Naive thymus-derived CD4-positive, alpha-beta T cell (primary cell): ENCODE measurements at regions of chr19 and their contacts with region 1.

Region 1: DNA sequence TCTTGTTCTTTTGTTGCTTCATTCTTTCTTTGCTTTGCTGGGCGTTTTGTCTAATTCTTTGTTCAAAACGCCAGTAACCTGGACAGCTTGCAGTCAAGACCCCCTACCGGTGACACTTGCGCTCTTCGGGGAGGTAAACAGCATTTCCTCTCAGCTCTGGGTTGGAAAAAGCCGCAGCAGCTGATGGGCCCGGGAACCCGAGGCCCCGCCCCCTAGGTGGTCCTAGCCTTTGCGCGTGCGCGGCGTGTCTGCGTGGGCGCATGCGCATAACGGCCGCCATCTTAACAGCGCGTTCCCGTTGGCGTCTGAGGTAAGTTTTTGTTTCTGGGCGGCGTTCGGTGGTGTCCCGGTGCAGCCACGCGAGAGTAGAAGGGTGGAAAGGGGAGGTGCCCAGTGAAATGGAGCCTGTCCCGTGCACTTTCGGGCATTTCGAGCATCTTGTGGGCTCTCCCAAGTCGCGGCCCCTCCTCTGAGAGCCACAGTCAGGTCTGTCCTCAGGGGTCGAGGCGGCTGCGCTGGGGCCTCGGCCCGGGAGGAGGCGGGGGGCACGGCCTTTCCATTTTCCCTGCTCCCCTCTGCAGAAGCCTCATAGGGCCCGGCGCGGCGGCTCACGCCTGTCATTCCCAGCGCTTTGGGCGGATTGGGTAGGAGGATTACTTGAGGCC is at the start of gene ZNF559:
- DNase-seq: peak; percentile 93 to 99 (median 97)
- ATAC-seq: peak; percentile 97
- H3K4me3 ChIP-seq: peak within 1 kb of the TSS; percentile 74
- H3K4me3 Mint-ChIP-seq: peak within 1 kb of the TSS; percentile 92 to 99 (median 95)
- H3K27ac ChIP-seq: peak within 1 kb of the TSS; percentile 85
- H3K27ac Mint-ChIP-seq: peak within 1 kb of the TSS; percentile 91 to 97 (median 93)
- H3K4me1 ChIP-seq: peaks cover 0 to 10% of the 10 kb centered on the region in 2 donors
- H3K4me1 Mint-ChIP-seq: peaks cover 6 to 46% (median 29%) of the 10 kb centered on the region in 7 donors
- H3K27me3 ChIP-seq: no peaks in the 10 kb centered on the region
- H3K27me3 Mint-ChIP-seq: peaks cover 0 to 2% (median 0%) of the 10 kb centered on the region in 5 donors
- total RNA-seq, gene ZNF559: 9.1 to 58.2 (median 16.5) TPM

Region 2: GRCh38 chr19:9205501-9206113 is 118.4 kb before region 1 on chr19:
- CTCF ChIA-PET with region 1: interaction called, 3 read pairs
- POLR2A ChIA-PET with region 1: no interaction called
- intact Hi-C with region 1: loop called in 1 of 2 experiments (anchors 1 kb)
- DNase-seq: peak; percentile 36 to 63 (median 53)
- ATAC-seq: peak; percentile 69
- H3K4me3 ChIP-seq: no peak overlapping the region
- H3K4me3 Mint-ChIP-seq: peak overlapping the region in 9 of 10 donors; percentile 37 to 69 (median 56)
- H3K27ac ChIP-seq: no peak overlapping the region
- H3K27ac Mint-ChIP-seq: no peak overlapping the region
- H3K4me1 ChIP-seq: no peaks in the 10 kb centered on the region
- H3K4me1 Mint-ChIP-seq: peaks cover 0 to 8% (median 0%) of the 10 kb centered on the region in 7 donors
- H3K27me3 ChIP-seq: no peaks in the 10 kb centered on the region
- H3K27me3 Mint-ChIP-seq: peaks cover 0 to 22% (median 6%) of the 10 kb centered on the region in 5 donors

Region 3: GRCh38 chr19:9309139-9309973 is 14.7 kb before region 1 on chr19 and contains the start of gene ZNF699:
- CTCF ChIA-PET with region 1: interaction called, 3 read pairs
- POLR2A ChIA-PET with region 1: interaction called, 35 read pairs
- intact Hi-C with region 1: loop called (anchors 1 kb)
- DNase-seq: peak; percentile 94 to 100 (median 97)
- ATAC-seq: peak; percentile 94
- H3K4me3 ChIP-seq: peak within 1 kb of the TSS; percentile 95
- H3K4me3 Mint-ChIP-seq: peak within 1 kb of the TSS; percentile 89 to 98 (median 96)
- H3K27ac ChIP-seq: peak within 1 kb of the TSS; percentile 98
- H3K27ac Mint-ChIP-seq: peak within 1 kb of the TSS; percentile 89 to 99 (median 97)
- H3K4me1 ChIP-seq: peaks cover 6 to 15% of the 10 kb centered on the region in 2 donors
- H3K4me1 Mint-ChIP-seq: peaks cover 4 to 37% (median 24%) of the 10 kb centered on the region in 7 donors
- H3K27me3 ChIP-seq: no peaks in the 10 kb centered on the region
- H3K27me3 Mint-ChIP-seq: peaks cover 0 to 2% (median 0%) of the 10 kb centered on the region in 5 donors
- total RNA-seq, gene ZNF699: 9.1 to 19.1 (median 15.5) TPM

Region 4: DNA sequence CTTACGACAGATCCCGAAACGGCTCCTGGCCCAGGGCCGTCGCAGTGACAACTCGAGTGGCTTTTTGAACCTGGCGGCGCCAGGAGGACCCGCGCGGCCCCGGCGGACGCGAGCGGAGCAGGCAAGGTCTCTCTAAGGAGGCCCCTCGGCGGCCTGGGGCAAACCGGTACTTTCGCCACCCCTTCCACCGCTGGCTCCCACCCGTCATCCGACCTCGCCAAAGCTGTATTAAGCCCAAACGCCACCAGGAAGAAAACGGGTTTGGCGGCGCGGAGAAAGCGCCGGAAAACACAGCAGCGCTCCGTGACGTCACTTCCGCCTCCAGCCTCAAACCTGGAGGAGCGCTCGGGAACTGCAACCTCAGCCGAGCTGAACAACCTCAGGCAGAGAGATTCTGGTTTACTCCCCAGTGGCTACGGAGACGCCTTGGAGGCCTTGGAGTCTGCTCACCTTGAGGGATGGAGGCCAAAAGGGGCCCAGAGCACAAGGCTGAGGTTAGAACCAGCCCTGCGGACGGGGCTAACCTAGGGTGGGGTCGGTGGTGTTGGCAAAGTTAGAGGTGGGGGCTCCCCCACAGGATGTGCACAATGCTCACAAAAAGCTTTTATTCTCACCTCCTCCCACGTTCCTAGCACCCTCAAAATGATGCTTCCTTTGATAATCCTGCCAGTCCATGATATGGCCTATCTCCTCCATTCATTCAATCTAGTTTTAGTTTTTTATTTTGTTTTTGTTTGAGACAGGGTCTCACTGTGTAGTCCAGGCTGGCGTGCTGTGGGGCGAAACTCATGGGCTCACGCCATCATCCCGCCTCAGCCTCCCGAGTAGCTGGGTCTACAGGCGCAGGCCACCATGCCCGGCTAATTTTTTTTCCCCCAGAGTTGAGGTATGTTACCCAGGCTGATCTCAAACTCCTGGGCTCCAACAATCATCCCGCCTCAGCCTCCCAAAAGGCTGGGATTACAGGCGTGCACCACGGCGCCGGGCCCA is 111.5 kb after region 1 on chr19 and contains the start of gene ZNF266:
- CTCF ChIA-PET with region 1: no interaction called
- POLR2A ChIA-PET with region 1: interaction called, 3 read pairs
- intact Hi-C with region 1: loop called (anchors 1 kb)
- DNase-seq: peak; percentile 82 to 93 (median 91)
- ATAC-seq: peak; percentile 92
- H3K4me3 ChIP-seq: peak within 1 kb of the TSS; percentile 73
- H3K4me3 Mint-ChIP-seq: peak within 1 kb of the TSS; percentile 89 to 97 (median 93)
- H3K27ac ChIP-seq: peak within 1 kb of the TSS; percentile 94
- H3K27ac Mint-ChIP-seq: peak within 1 kb of the TSS; percentile 95 to 99 (median 98)
- H3K4me1 ChIP-seq: peaks cover 26 to 27% of the 10 kb centered on the region in 2 donors
- H3K4me1 Mint-ChIP-seq: peaks cover 20 to 54% (median 48%) of the 10 kb centered on the region in 7 donors
- H3K27me3 ChIP-seq: no peaks in the 10 kb centered on the region
- H3K27me3 Mint-ChIP-seq: no peaks in the 10 kb centered on the region
- total RNA-seq, gene ZNF266: 34.0 to 73.9 (median 55.0) TPM

Region 5: DNA sequence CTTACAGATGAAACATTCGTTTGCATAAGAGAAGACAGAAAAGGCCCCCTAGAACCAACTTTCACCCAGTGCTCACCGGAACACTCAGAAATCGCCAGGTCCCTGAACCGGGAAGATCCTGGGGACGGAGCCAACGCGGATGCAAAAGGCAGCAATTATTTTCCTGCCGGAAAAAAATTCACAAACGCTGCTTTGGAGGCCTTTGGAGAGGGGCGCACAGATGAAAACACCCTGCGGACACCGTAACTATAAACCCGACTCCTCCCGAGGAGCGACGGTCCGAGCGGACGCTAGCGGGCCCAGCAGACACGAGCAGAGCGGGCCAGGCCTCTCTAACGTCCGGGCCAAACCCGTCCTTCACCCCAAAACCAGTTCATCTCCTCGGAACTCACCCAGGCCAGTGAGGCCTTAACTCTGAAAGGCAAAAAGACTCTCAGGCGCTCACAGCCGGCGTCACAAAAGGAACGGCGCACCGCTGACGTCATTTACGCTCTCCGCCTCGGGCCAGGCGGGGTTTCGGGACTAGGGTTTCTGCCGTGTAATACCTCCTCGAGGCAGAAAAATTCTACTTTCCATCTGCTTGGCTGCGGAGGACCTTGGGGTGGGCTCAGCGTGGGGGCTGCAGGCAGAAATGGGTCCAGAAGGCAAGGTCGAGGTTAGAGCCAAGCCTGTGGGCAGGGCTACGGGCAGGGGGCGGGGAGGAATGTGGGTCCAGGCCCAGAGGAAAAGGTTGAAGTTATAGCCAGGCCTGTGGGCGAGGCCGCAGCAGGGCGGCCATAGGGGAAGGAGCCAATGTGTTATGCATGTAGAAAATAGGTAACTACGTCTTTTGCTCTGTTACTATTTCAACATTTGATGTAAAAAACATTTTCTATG is 214.4 kb after region 1 on chr19 and contains the start of gene ZNF426:
- CTCF ChIA-PET with region 1: no interaction called
- POLR2A ChIA-PET with region 1: no interaction called
- intact Hi-C with region 1: loop called in 1 of 2 experiments (anchors 1 kb)
- DNase-seq: peak; percentile 76 to 90 (median 85)
- ATAC-seq: peak; percentile 96
- H3K4me3 ChIP-seq: peak within 1 kb of the TSS; percentile 93
- H3K4me3 Mint-ChIP-seq: peak within 1 kb of the TSS; percentile 89 to 99 (median 98)
- H3K27ac ChIP-seq: peak within 1 kb of the TSS; percentile 90
- H3K27ac Mint-ChIP-seq: peak within 1 kb of the TSS; percentile 95 to 100 (median 97)
- H3K4me1 ChIP-seq: peaks cover 0 to 7% of the 10 kb centered on the region in 2 donors
- H3K4me1 Mint-ChIP-seq: peaks cover 14 to 46% (median 33%) of the 10 kb centered on the region in 7 donors
- H3K27me3 ChIP-seq: no peaks in the 10 kb centered on the region
- H3K27me3 Mint-ChIP-seq: no peaks in the 10 kb centered on the region
- total RNA-seq, gene ZNF426: 11.2 to 22.6 (median 15.8) TPM

Region 6: GRCh38 chr19:9674663-9675357 is 350.8 kb after region 1 on chr19 and contains the start of gene ZNF562:
- CTCF ChIA-PET with region 1: no interaction called
- POLR2A ChIA-PET with region 1: no interaction called
- intact Hi-C with region 1: loop called in 1 of 2 experiments (anchors 2 kb)
- DNase-seq: peak; percentile 66 to 82 (median 76)
- ATAC-seq: peak; percentile 92
- H3K4me3 ChIP-seq: peak within 1 kb of the TSS; percentile 99
- H3K4me3 Mint-ChIP-seq: peak within 1 kb of the TSS; percentile 86 to 99 (median 96)
- H3K27ac ChIP-seq: peak within 1 kb of the TSS; percentile 91
- H3K27ac Mint-ChIP-seq: peak within 1 kb of the TSS; percentile 87 to 99 (median 96)
- H3K4me1 ChIP-seq: peaks cover 0 to 4% of the 10 kb centered on the region in 2 donors
- H3K4me1 Mint-ChIP-seq: peaks cover 11 to 33% (median 29%) of the 10 kb centered on the region in 7 donors
- H3K27me3 ChIP-seq: no peaks in the 10 kb centered on the region
- H3K27me3 Mint-ChIP-seq: no peaks in the 10 kb centered on the region
- total RNA-seq, gene ZNF562: 8.9 to 18.6 (median 16.5) TPM

Region 7: DNA sequence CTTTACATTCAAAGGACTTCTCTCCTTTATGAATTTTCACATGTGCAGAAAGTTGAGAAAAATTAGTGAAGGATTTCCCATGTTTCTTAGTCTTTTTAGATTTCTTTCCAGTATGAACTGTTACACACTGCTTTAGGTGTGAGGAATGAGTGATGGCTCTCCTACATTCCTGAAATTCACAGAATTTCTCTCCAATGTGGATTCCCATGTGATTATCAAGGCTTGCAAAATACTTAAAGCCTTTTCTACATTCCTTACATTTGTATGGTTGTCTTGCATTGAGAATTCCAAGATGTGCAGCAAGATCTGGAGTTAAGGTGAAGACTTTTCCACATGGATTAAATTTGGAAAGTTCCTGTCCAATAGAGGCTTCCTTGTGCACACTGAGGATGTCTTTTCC is 366.7 kb after region 1 on chr19:
- CTCF ChIA-PET with region 1: no interaction called
- POLR2A ChIA-PET with region 1: no interaction called
- intact Hi-C with region 1: no loop called
- DNase-seq: no peak
- ATAC-seq: no peak
- H3K4me3 ChIP-seq: no peak overlapping the region
- H3K4me3 Mint-ChIP-seq: no peak overlapping the region
- H3K27ac ChIP-seq: no peak overlapping the region
- H3K27ac Mint-ChIP-seq: no peak overlapping the region
- H3K4me1 ChIP-seq: no peaks in the 10 kb centered on the region
- H3K4me1 Mint-ChIP-seq: no peaks in the 10 kb centered on the region
- H3K27me3 ChIP-seq: no peaks in the 10 kb centered on the region
- H3K27me3 Mint-ChIP-seq: peaks cover 0 to 14% (median 6%) of the 10 kb centered on the region in 5 donors